Endothelial cell of umbilical vein (primary cell): ENCODE measurements at regions of chrX and their contacts with region 1.

Region 1: GRCh38 chrX:46758906-46759644 is at the start of gene SLC9A7:
- DNase-seq: peak; percentile 73
- H3K4me3 ChIP-seq: peak within 1 kb of the TSS; percentile 53 to 60 (median 54)
- H3K27ac ChIP-seq: no peak within 1 kb of the TSS
- H3K4me1 ChIP-seq: peaks cover 13% of the 10 kb centered on the region
- H3K27me3 ChIP-seq: no peaks in the 10 kb centered on the region
- CTCF ChIP-seq: peak; percentile 73 to 85
- POLR2A ChIP-seq: no peak
- total RNA-seq, gene SLC9A7: 7.5 and 10.4 TPM in 2 replicates

Region 2: GRCh38 chrX:46554942-46555341 is 204.1 kb before region 1 on chrX:
- CTCF ChIA-PET with region 1: interaction called, 4 read pairs
- POLR2A ChIA-PET with region 1: no interaction called
- dilution Hi-C with region 1: no loop called
- intact Hi-C with region 1: loop called (anchors 10 kb)
- DNase-seq: peak; percentile 25
- H3K4me3 ChIP-seq: no peak overlapping the region
- H3K27ac ChIP-seq: no peak overlapping the region
- H3K4me1 ChIP-seq: no peaks in the 10 kb centered on the region
- H3K27me3 ChIP-seq: no peaks in the 10 kb centered on the region
- CTCF ChIP-seq: no peak
- POLR2A ChIP-seq: no peak

Region 3: DNA sequence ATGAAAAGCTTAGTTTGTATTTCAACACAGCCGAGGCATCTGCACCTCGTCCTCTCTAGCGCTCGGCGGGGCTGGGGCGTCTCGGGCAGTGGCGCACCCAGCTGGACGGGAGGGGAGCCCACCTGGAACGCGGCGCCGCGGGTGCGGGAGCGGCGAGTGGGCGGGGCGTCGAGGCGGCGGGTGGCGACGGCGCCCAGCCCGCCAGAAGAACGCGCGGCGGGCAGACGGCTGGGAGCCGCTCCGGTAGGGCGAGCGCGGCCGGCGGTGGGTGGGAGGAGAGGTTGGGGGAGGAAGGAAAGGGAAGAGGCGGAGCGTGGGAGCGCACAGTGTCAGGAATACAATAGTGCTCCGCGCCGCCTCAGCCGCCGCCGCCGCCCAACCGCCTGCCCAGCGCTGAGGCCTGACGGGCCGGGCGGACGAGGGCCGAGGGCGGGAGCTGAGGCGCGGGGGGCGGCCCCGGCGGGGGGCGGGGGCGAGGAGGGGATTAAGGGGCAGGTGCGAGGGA is 153.1 kb after region 1 on chrX and contains the start of gene JADE3:
- CTCF ChIA-PET with region 1: no interaction called
- POLR2A ChIA-PET with region 1: no interaction called
- dilution Hi-C with region 1: no loop called
- intact Hi-C with region 1: loop called (anchors 2 kb)
- DNase-seq: peak; percentile 75
- H3K4me3 ChIP-seq: peak within 1 kb of the TSS; percentile 72 to 79 (median 75)
- H3K27ac ChIP-seq: peak within 1 kb of the TSS; percentile 45
- H3K4me1 ChIP-seq: peaks cover 11% of the 10 kb centered on the region
- H3K27me3 ChIP-seq: no peaks in the 10 kb centered on the region
- CTCF ChIP-seq: no peak
- POLR2A ChIP-seq: no peak
- total RNA-seq, gene JADE3: 16.3 and 18.4 TPM in 2 replicates

Region 4: GRCh38 chrX:46978341-46979291 is 219.5 kb after region 1 on chrX:
- CTCF ChIA-PET with region 1: no interaction called
- POLR2A ChIA-PET with region 1: no interaction called
- dilution Hi-C with region 1: no loop called
- intact Hi-C with region 1: loop called (anchors 1 kb)
- DNase-seq: peak; percentile 87
- H3K4me3 ChIP-seq: peak overlapping the region in 1 of 3 experiments; percentile 69
- H3K27ac ChIP-seq: peak overlapping the region; percentile 97
- H3K4me1 ChIP-seq: peaks cover 2% of the 10 kb centered on the region
- H3K27me3 ChIP-seq: no peaks in the 10 kb centered on the region
- CTCF ChIP-seq: peak; percentile 65 to 66
- POLR2A ChIP-seq: no peak

Region 5: DNA sequence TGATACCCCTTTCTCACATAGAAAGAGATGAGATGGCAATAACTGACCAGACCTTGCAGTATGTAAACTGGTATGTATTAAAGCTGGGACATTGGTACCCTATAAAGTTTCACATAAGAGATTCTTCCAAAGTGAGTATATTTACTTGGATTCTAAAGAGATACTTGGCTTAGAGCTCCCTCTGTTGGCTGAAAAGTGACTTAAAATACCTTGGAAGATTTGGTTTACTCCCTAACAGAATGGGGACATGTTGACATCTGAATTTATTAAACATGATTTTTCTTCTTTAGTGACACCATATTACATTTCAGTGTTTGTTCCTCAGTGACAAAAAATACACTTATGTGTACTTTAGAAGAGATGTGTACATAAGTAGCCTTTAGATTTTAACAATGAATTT is 271.3 kb after region 1 on chrX:
- CTCF ChIA-PET with region 1: interaction called, 6 read pairs
- POLR2A ChIA-PET with region 1: no interaction called
- dilution Hi-C with region 1: no loop called
- intact Hi-C with region 1: loop called (anchors 1 kb)
- DNase-seq: peak; percentile 69
- H3K4me3 ChIP-seq: no peak overlapping the region
- H3K27ac ChIP-seq: no peak overlapping the region
- H3K4me1 ChIP-seq: no peaks in the 10 kb centered on the region
- H3K27me3 ChIP-seq: no peaks in the 10 kb centered on the region
- CTCF ChIP-seq: peak; percentile 19 to 26
- POLR2A ChIP-seq: no peak

Region 6: GRCh38 chrX:47093248-47093647 is 334.2 kb after region 1 on chrX:
- CTCF ChIA-PET with region 1: interaction called, 4 read pairs
- POLR2A ChIA-PET with region 1: no interaction called
- dilution Hi-C with region 1: no loop called
- intact Hi-C with region 1: loop called (anchors 2 kb)
- DNase-seq: peak; percentile 26
- H3K4me3 ChIP-seq: no peak overlapping the region
- H3K27ac ChIP-seq: no peak overlapping the region
- H3K4me1 ChIP-seq: no peaks in the 10 kb centered on the region
- H3K27me3 ChIP-seq: no peaks in the 10 kb centered on the region
- CTCF ChIP-seq: peak in 1 of 2 donors; percentile 7
- POLR2A ChIP-seq: no peak